ENCODE measurements at regions of chr18 and their contacts with region 1.

Region 1: GRCh38 chr18:35949903-35950627 is 22.4 kb upstream of the RMP24 start:
- H3K4me3 ChIP-seq: peak overlapping the region; percentile 52
- H3K27ac ChIP-seq: no peak overlapping the region
- H3K4me1 ChIP-seq: no peaks in the 10 kb centered on the region
- CTCF ChIP-seq: peak; percentile 62

Region 2: GRCh38 chr18:35653392-35654135 is 296.5 kb before region 1 on chr18:
- CTCF ChIA-PET with region 1: no interaction called
- POLR2A ChIA-PET with region 1: no interaction called
- H3K4me3 ChIP-seq: no peak overlapping the region
- H3K27ac ChIP-seq: no peak overlapping the region
- H3K4me1 ChIP-seq: no peaks in the 10 kb centered on the region
- CTCF ChIP-seq: no peak

Region 3: DNA sequence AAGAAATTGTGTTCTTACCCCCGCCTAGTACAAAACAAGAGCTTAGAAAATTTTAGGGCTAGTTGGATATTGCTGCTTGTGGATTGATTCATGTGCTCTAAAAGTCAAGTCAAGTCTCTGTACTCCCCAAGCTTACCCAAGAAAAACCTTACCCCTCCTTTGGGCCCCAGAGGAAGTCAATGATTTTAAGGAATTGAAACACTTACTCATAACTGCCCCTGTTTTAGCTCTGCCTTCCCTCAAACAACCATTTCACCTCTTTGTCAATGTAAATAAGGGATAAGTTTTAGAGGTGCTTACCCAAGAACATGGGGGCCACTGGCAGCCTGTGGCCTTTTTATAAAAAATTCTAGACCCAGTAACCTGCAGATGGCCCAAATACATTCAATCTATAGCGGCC is 114.2 kb before region 1 on chr18:
- CTCF ChIA-PET with region 1: no interaction called
- POLR2A ChIA-PET with region 1: no interaction called
- H3K4me3 ChIP-seq: no peak overlapping the region
- H3K27ac ChIP-seq: no peak overlapping the region
- H3K4me1 ChIP-seq: no peaks in the 10 kb centered on the region
- CTCF ChIP-seq: no peak

Region 4: DNA sequence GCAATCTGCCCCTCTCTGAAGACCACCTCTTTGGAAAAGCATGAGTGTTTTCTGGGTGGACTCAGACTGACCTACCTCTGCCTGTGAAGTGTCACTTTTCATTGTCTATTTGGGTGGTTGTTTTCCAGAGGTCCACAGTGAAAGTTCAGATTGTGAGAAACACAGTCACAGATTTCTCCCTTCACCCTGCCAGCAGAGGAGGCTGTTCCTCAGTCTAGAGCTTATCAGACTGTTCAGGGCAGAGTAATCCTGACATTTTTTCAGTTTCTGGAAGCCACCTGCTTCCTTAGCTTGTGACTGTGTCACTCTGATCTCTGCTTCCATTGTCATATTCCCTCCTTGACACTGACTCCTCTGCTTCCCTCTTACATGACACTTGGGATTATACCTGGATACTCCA is 33.0 kb before region 1 on chr18:
- CTCF ChIA-PET with region 1: interaction called, 14 read pairs
- POLR2A ChIA-PET with region 1: no interaction called
- H3K4me3 ChIP-seq: no peak overlapping the region
- H3K27ac ChIP-seq: no peak overlapping the region
- H3K4me1 ChIP-seq: no peaks in the 10 kb centered on the region
- CTCF ChIP-seq: no peak; the same call in 1 of the 2 replicates

Region 5: GRCh38 chr18:35939138-35939537 is 10.9 kb before region 1 on chr18:
- CTCF ChIA-PET with region 1: interaction called, 25 read pairs
- POLR2A ChIA-PET with region 1: no interaction called
- H3K4me3 ChIP-seq: no peak overlapping the region
- H3K27ac ChIP-seq: no peak overlapping the region
- H3K4me1 ChIP-seq: no peaks in the 10 kb centered on the region
- CTCF ChIP-seq: no peak

Measured in HEK293 (cell line).